ENCODE measurements at regions of chr11 and their contacts with region 1.

Region 1: DNA sequence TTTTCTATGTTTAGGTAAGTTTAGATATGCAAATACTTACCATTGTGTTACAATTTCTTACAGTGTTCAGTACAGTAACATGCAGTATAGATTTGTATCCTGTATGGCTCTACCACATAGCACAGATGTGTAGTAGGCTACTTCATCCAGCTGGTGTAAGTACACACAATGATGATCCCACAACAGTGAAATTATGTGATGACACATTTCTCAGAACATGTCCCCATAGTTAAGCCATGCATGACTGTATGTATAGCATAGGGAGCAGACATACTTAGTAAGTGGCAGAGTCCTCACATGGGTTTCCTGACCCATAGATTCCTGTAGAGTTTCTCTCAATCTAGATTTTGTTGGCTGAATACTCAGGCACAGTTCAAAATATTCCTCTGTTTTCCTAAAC is 26.8 kb upstream of the BARX2 start:
- DNase-seq: no peak
- CTCF ChIP-seq: no peak

Region 2: DNA sequence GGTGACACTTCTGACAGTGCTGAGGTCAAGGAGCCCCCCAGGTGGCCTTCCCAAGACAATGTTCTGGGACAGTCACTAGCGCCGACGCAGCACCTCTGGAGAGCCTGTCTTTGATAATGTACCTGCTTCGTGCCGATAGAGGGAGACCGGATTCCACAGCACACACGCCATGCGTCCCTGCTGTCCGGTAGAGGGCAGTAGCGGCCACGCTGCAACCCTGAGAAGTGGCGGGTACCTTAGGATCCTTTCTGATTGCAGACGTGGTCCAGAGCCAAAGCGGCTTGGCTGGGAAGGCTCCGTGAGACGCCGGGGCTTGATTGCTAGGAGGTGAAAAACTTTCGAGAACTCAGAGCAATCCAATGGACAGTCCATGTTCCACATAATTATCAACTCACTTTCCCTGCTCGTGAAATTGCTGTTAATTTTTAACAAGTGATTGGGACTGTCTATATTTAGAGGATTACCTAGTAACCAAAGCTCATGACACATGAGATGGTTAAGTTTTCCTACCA is 15.4 kb after region 1 on chr11:
- CTCF ChIA-PET with region 1: interaction called, 12 read pairs
- POLR2A ChIA-PET with region 1: no interaction called
- DNase-seq: peak; percentile 69
- CTCF ChIP-seq: peak; percentile 100